Naive thymus-derived CD4-positive, alpha-beta T cell (primary cell): ENCODE measurements at regions of chr4 and their contacts with region 1.

Region 1: DNA sequence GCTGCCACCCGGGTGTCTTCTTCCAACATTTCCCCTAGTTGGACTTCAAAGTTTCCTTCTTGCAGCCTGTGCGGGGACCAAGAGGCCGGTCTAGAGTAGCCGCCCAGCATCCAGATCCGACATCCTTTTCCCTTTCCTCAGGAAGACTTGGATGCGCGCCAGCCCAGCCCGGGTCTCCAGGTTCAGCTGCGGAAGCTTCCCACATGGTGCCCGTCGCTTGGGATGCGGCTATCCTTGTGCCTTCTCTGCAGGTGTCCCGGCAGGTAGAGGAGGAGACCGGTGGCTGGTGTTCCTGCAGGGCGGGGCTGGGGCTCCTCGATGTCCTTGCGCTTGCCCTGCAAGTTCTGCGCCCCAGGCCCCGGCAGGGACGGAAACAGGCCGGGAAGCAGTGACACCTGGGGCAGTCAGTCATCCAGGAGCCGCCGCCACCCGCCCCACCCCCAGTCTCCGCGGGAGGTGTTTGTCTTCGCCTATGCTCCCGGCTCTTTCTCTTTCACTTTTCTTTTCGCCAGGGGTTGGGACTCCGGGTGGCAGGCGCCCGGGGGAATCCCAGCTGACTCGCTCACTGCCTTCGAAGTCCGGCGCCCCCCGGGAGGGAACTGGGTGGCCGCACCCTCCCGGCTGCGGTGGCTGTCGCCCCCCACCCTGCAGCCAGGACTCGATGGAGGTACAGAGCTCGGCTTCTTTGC is at the start of gene IL15:
- DNase-seq: peak; percentile 4 to 70 (median 20)
- ATAC-seq: peak; percentile 82
- H3K4me3 ChIP-seq: peak within 1 kb of the TSS; percentile 80
- H3K4me3 Mint-ChIP-seq: peak within 1 kb of the TSS; percentile 80 to 98 (median 95)
- H3K27ac ChIP-seq: peak within 1 kb of the TSS; percentile 40
- H3K27ac Mint-ChIP-seq: peak within 1 kb of the TSS in 7 of 9 donors; percentile 7 to 85 (median 69)
- H3K4me1 ChIP-seq: peaks cover 2 to 10% of the 10 kb centered on the region in 2 donors
- H3K4me1 Mint-ChIP-seq: peaks cover 8 to 25% (median 16%) of the 10 kb centered on the region in 7 donors
- H3K27me3 ChIP-seq: no peaks in the 10 kb centered on the region
- H3K27me3 Mint-ChIP-seq: peaks cover 7 to 52% (median 14%) of the 10 kb centered on the region in 5 donors
- total RNA-seq, gene IL15: 0.54 to 8.7 (median 2.7) TPM

Region 2: GRCh38 chr4:141220655-141221605 is 415.3 kb before region 1 on chr4 and contains the start of gene ZNF330:
- CTCF ChIA-PET with region 1: no interaction called
- POLR2A ChIA-PET with region 1: no interaction called
- intact Hi-C with region 1: loop called in 1 of 2 experiments (anchors 1 kb)
- DNase-seq: peak; percentile 80 to 97 (median 90)
- ATAC-seq: peak; percentile 97
- H3K4me3 ChIP-seq: peak within 1 kb of the TSS; percentile 94
- H3K4me3 Mint-ChIP-seq: peak within 1 kb of the TSS; percentile 91 to 99 (median 94)
- H3K27ac ChIP-seq: peak within 1 kb of the TSS; percentile 93
- H3K27ac Mint-ChIP-seq: peak within 1 kb of the TSS; percentile 91 to 97 (median 96)
- H3K4me1 ChIP-seq: peaks cover 9 to 13% of the 10 kb centered on the region in 2 donors
- H3K4me1 Mint-ChIP-seq: peaks cover 24 to 58% (median 52%) of the 10 kb centered on the region in 7 donors
- H3K27me3 ChIP-seq: no peaks in the 10 kb centered on the region
- H3K27me3 Mint-ChIP-seq: peaks cover 0 to 18% (median 6%) of the 10 kb centered on the region in 5 donors
- total RNA-seq, gene ZNF330: 31.7 to 44.7 (median 41.0) TPM